ENCODE measurements at regions of chr21 and their contacts with region 1.

Region 1: GRCh38 chr21:35051287-35051818 is 2.3 kb upstream of the RUNX1 start:
- DNase-seq: peak; percentile 68 to 94 (median 84)
- ATAC-seq: peak; percentile 41
- H3K4me3 ChIP-seq: no peak overlapping the region
- H3K4me3 Mint-ChIP-seq: peak overlapping the region; percentile 95
- H3K27ac ChIP-seq: peak overlapping the region in 1 of 2 experiments; percentile 79
- H3K27ac Mint-ChIP-seq: peak overlapping the region; percentile 97
- H3K4me1 ChIP-seq: peaks cover 29% of the 10 kb centered on the region
- H3K4me1 Mint-ChIP-seq: peaks cover 49% of the 10 kb centered on the region
- H3K27me3 ChIP-seq: no peaks in the 10 kb centered on the region
- H3K27me3 Mint-ChIP-seq: no peaks in the 10 kb centered on the region
- CTCF ChIP-seq: peak; percentile 58

Region 2: DNA sequence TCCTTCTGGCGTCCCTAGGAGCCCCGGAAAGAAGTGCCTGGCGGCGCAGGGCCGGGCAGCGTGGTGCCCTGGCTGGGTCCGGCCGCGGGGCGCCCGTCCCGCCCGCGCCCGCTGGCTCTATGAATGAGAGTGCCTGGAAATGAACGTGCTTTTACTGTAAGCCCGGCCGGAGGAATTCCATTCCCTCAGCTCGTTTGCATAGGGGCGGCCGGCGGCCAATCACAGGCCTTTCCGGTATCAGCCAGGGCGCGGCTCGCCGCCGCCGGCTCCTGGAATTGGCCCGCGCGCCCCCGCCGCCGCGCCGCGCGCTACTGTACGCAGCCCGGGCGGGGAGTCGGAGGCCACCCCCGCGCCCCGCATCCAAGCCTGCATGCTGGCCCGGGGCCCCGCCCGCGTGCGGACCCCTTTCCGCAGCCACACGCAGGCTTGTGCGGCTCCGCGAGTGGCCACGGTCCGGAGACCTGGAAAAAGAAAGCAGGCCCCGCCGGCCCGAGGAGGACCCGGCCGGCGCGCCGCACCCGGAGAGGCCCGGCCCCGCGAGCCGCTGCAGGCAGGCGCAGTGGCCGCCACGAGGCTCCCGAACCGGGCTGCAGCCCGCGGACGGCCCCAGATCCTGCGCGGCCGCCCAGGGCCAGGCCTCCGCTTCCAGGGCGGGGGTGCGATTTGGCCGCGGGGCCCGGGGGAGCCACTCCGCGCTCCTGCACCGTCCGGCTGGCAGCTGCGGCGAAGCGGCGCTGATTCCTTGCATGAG is 162.6 kb before region 1 on chr21:
- CTCF ChIA-PET with region 1: interaction called, 81 read pairs
- POLR2A ChIA-PET with region 1: interaction called, 74 read pairs
- intact Hi-C with region 1: loop called (anchors 1 kb)
- DNase-seq: peak; percentile 33 to 88 (median 70)
- ATAC-seq: peak; percentile 28
- H3K4me3 ChIP-seq: peak overlapping the region; percentile 72 to 77
- H3K4me3 Mint-ChIP-seq: peak overlapping the region; percentile 90
- H3K27ac ChIP-seq: peak overlapping the region; percentile 58 to 78
- H3K27ac Mint-ChIP-seq: peak overlapping the region; percentile 94
- H3K4me1 ChIP-seq: peaks cover 34% of the 10 kb centered on the region
- H3K4me1 Mint-ChIP-seq: peaks cover 51% of the 10 kb centered on the region
- H3K27me3 ChIP-seq: no peaks in the 10 kb centered on the region
- H3K27me3 Mint-ChIP-seq: no peaks in the 10 kb centered on the region
- CTCF ChIP-seq: no peak

Region 3: GRCh38 chr21:34986561-34987500 is 64.5 kb before region 1 on chr21:
- CTCF ChIA-PET with region 1: interaction called, 5 read pairs
- POLR2A ChIA-PET with region 1: interaction called, 11 read pairs
- intact Hi-C with region 1: loop called (anchors 1 to 2 kb)
- DNase-seq: peak; percentile 19 to 81 (median 68)
- ATAC-seq: peak; percentile 72
- H3K4me3 ChIP-seq: peak overlapping the region; percentile 3 to 7
- H3K4me3 Mint-ChIP-seq: peak overlapping the region; percentile 63
- H3K27ac ChIP-seq: peak overlapping the region; percentile 15 to 71
- H3K27ac Mint-ChIP-seq: peak overlapping the region; percentile 95
- H3K4me1 ChIP-seq: peaks cover 89% of the 10 kb centered on the region
- H3K4me1 Mint-ChIP-seq: peaks cover 93% of the 10 kb centered on the region
- H3K27me3 ChIP-seq: no peaks in the 10 kb centered on the region
- H3K27me3 Mint-ChIP-seq: no peaks in the 10 kb centered on the region
- CTCF ChIP-seq: no peak

Region 4: DNA sequence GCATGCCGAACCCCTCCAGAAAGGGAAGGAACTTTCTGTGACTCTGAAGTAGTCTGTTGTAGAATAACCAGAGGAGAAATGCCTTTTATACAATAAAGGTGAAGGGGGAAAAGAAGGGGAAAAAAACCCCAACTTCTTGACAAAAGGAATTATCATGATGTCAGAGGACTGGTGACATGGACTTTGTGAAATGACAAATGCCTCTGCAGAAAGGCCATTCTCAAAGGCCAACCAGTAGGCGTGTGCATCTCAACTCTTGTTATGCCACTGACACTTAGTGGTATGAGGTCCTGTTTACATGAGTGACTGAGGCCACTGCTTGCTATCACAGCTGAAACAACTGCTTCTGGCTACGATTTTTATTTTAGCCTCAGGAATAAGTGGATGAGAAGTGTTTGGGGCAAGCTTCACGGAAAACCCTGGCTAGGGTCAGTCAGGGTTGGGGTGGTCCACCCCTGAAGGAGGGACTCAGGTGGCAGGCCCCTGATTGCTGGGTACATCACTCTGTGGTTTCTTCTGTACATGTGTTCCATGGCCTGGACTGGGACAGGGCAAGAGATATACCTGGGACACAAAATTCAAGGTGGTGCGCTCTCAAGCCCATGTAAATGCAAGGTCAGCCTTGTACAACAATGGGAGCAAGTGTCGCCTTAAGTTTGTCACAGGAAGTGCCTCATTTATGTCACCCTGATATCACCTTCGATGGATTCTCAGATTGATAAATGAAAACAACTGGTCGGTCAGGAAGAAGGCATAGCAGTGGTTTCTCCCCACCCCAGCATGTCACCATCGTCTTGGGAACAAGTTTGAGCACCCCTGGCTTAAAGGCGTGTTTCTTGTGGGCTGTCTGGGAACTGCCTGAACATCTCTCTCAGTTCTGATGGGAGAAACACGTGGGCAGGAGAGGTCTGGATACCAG is 14.6 kb before region 1 on chr21:
- CTCF ChIA-PET with region 1: interaction called, 13 read pairs
- POLR2A ChIA-PET with region 1: interaction called, 23 read pairs
- intact Hi-C with region 1: loop called in 1 of 2 experiments (anchors 1 kb)
- DNase-seq: peak in 2 of 9 experiments; percentile 42 to 67
- ATAC-seq: peak; percentile 18
- H3K4me3 ChIP-seq: peak overlapping the region in 1 of 2 experiments; percentile 4
- H3K4me3 Mint-ChIP-seq: peak overlapping the region; percentile 70
- H3K27ac ChIP-seq: peak overlapping the region; percentile 2 to 81
- H3K27ac Mint-ChIP-seq: peak overlapping the region; percentile 92
- H3K4me1 ChIP-seq: peaks cover 82% of the 10 kb centered on the region
- H3K4me1 Mint-ChIP-seq: peaks cover 95% of the 10 kb centered on the region
- H3K27me3 ChIP-seq: no peaks in the 10 kb centered on the region
- H3K27me3 Mint-ChIP-seq: no peaks in the 10 kb centered on the region
- CTCF ChIP-seq: no peak

Region 5: GRCh38 chr21:35226948-35227744 is 175.8 kb after region 1 on chr21:
- CTCF ChIA-PET with region 1: interaction called, 5 read pairs
- POLR2A ChIA-PET with region 1: interaction called, 7 read pairs
- intact Hi-C with region 1: loop called (anchors 2 to 5 kb)
- DNase-seq: peak; percentile 18 to 84 (median 41)
- ATAC-seq: peak; percentile 87
- H3K4me3 ChIP-seq: peak overlapping the region; percentile 2 to 16
- H3K4me3 Mint-ChIP-seq: peak overlapping the region; percentile 67
- H3K27ac ChIP-seq: peak overlapping the region; percentile 48 to 71
- H3K27ac Mint-ChIP-seq: peak overlapping the region; percentile 95
- H3K4me1 ChIP-seq: peaks cover 38% of the 10 kb centered on the region
- H3K4me1 Mint-ChIP-seq: peaks cover 41% of the 10 kb centered on the region
- H3K27me3 ChIP-seq: no peaks in the 10 kb centered on the region
- H3K27me3 Mint-ChIP-seq: no peaks in the 10 kb centered on the region
- CTCF ChIP-seq: no peak

Region 6: DNA sequence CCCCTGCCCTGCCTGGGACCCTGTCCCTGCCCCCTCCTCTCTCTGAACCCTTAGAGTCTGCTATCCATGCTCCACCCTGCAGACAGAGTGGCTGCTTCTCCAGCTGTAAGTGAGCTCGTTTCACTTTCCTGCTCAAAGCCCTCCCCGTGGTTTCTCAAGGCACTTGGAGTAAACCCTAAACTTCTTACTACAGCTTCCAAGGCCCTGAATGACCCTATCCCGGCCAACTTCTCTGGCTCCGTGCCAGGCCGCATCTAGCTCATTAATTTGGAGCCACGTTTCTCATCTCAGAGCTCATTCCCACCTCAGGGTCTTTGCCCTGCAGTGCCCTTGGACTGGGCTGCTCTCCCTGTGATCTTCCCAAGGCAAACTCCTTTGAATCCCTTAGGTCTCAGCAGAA is 232.8 kb after region 1 on chr21:
- CTCF ChIA-PET with region 1: no interaction called
- POLR2A ChIA-PET with region 1: no interaction called
- intact Hi-C with region 1: no loop called
- DNase-seq: no peak
- ATAC-seq: no peak
- H3K4me3 ChIP-seq: no peak overlapping the region
- H3K4me3 Mint-ChIP-seq: no peak overlapping the region
- H3K27ac ChIP-seq: no peak overlapping the region
- H3K27ac Mint-ChIP-seq: no peak overlapping the region
- H3K4me1 ChIP-seq: no peaks in the 10 kb centered on the region
- H3K4me1 Mint-ChIP-seq: no peaks in the 10 kb centered on the region
- H3K27me3 ChIP-seq: no peaks in the 10 kb centered on the region
- H3K27me3 Mint-ChIP-seq: no peaks in the 10 kb centered on the region
- CTCF ChIP-seq: no peak

Region 7: GRCh38 chr21:35840197-35840799 is 788.9 kb after region 1 on chr21:
- CTCF ChIA-PET with region 1: interaction called, 16 read pairs
- POLR2A ChIA-PET with region 1: no interaction called
- intact Hi-C with region 1: no loop called
- DNase-seq: peak in 8 of 9 experiments; percentile 5 to 74 (median 48)
- ATAC-seq: no peak
- H3K4me3 ChIP-seq: no peak overlapping the region
- H3K4me3 Mint-ChIP-seq: no peak overlapping the region
- H3K27ac ChIP-seq: no peak overlapping the region
- H3K27ac Mint-ChIP-seq: no peak overlapping the region
- H3K4me1 ChIP-seq: peaks cover 8% of the 10 kb centered on the region
- H3K4me1 Mint-ChIP-seq: peaks cover 6% of the 10 kb centered on the region
- H3K27me3 ChIP-seq: peaks cover 0 to 4% of the 10 kb centered on the region in 2 experiments
- H3K27me3 Mint-ChIP-seq: no peaks in the 10 kb centered on the region
- CTCF ChIP-seq: peak; percentile 93

Measured in CD8-positive, alpha-beta T cell (primary cell).